ENCODE measurements at regions of chrX and their contacts with region 1.

Region 1: DNA sequence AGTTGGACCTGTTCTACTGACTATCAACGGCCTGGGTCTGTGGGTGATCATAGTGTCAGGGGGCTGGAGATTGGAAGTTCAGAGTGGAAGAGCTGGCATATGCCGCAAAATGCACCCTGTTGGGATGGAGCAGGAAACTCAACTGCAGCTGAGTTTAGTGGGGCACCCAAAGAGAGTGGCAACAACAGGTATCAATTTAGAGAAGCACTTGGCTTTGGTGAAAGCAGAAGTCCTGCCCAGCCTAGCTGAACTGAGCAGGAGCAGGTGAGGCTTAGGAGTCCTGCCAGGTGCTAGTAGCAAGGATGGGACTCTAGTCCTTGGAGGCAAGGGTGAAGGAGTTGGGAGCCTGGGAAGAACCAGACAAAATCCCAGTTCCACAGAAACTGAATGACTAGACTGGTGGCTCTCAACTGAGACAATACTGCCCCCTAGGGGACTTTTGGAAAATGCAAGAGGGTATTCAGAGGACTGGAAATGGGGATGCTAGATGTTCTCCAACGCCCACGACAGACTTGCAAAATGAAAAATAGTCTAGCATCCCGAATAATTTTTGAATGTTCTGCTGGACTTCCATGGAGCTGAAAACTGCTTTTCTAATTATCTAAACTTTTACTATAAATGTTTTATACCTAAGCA is 49.4 kb downstream of the RTL9 start:
- DNase-seq: no peak
- H3K4me3 ChIP-seq: no peak overlapping the region
- H3K27me3 ChIP-seq: no peaks in the 10 kb centered on the region
- CTCF ChIP-seq: peak; percentile 60

Region 2: GRCh38 chrX:110317820-110318658 is 90.0 kb before region 1 on chrX and contains the start of gene AMMECR1:
- CTCF ChIA-PET with region 1: interaction called, 19 read pairs
- POLR2A ChIA-PET with region 1: no interaction called
- DNase-seq: peak; percentile 27
- H3K4me3 ChIP-seq: peak within 1 kb of the TSS; percentile 63
- H3K27me3 ChIP-seq: no peaks in the 10 kb centered on the region
- CTCF ChIP-seq: no peak
- polyA plus RNA-seq, gene AMMECR1: 7.3 and 9.1 TPM in 2 replicates

Region 3: GRCh38 chrX:110418316-110419235 is 10.5 kb after region 1 on chrX:
- CTCF ChIA-PET with region 1: interaction called, 22 read pairs
- POLR2A ChIA-PET with region 1: no interaction called
- DNase-seq: no peak
- H3K4me3 ChIP-seq: no peak overlapping the region
- H3K27me3 ChIP-seq: no peaks in the 10 kb centered on the region
- CTCF ChIP-seq: peak; percentile 61

Region 4: GRCh38 chrX:110531873-110532580 is 124.0 kb after region 1 on chrX:
- CTCF ChIA-PET with region 1: no interaction called
- POLR2A ChIA-PET with region 1: no interaction called
- DNase-seq: no peak
- H3K4me3 ChIP-seq: no peak overlapping the region
- H3K27me3 ChIP-seq: no peaks in the 10 kb centered on the region
- CTCF ChIP-seq: no peak

Measured in BJ (cell line).